ENCODE measurements at regions of chr20 and their contacts with region 1.

Region 1: DNA sequence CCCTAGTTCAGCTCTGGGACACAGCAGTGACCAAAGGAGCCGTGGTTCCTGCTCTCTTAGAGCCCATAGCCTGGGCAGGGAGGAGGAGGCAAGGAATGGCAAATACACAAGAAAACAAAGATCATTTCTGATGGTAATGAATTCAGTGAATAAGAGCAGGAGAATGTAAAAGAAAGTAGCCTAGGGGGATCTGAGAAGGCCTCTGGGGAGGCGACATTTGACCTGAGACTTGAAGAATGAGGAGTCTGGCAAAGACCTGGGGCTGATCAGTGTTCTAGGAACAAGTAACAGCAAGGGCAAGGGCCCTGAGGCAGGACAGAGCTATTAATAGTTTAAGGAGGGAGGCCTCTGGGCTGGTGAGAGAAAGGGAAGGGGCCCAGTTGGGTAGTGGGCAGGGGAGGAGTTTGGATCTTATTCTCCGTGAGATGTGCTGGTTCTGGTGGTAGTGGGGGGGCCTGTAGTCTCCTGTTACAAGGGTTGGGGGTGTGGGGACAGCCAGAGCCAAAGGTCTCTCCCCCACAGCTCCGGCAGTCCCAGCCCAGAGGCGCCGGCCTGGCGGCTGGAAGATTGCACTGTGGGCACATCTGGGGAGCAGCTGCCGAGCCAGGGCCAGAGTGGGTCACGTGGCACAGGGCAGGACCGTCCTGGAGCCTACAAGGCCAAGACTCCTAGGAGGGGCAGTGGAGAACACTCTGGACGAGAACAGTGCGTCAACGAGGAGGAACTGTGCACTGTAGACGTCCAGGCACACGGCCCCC is 9.3 kb upstream of the ID1 start:
- DNase-seq: peak; percentile 93

Region 2: GRCh38 chr20:31572701-31573554 is 22.9 kb before region 1 on chr20:
- intact Hi-C with region 1: loop called in 1 of 2 experiments (anchors 2 kb)
- DNase-seq: peak; percentile 98

Region 3: DNA sequence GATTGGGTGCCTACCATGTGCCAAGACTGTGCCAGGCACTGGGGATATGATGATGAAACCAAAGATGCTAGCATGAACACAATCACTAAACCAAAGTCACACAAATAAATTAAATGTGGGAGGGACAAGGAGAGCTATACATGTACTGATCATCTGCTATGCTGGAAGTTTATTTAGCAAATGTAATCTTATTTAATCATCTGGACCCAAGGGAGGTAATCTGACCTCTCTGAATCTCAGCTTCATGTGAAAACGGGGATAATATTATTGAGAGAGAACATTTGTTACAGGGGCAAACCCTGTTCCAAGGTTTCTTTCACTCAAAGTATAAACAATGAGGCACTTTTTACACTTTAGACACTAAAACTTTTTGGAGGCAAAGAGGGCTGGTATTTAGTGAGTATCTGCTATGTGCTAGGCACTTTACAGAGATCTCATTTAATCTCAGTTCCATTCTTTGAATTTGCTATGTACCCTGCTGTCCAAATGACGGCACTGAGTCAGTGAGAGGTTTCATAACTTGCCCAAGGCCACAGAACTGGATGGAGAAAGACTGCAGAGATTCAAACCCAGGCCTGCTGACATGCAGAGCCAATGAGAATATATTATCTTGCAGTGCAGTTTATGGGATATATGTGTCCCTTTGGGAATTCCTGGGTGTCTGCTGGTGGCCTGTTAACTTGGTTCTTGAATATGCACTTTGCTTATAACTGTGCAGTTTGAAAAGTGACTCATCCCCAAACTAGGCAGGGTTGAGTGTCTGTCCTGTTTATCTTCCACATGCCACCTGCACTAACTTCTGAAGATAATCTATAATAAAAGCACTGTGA is 759.0 kb after region 1 on chr20:
- intact Hi-C with region 1: loop called in 1 of 2 experiments (anchors 5 kb)
- DNase-seq: no peak

Measured in posterior vena cava (tissue), 2 donors.